HEK293 (cell line): ENCODE measurements at regions of chr2 and their contacts with region 1.

Region 1: DNA sequence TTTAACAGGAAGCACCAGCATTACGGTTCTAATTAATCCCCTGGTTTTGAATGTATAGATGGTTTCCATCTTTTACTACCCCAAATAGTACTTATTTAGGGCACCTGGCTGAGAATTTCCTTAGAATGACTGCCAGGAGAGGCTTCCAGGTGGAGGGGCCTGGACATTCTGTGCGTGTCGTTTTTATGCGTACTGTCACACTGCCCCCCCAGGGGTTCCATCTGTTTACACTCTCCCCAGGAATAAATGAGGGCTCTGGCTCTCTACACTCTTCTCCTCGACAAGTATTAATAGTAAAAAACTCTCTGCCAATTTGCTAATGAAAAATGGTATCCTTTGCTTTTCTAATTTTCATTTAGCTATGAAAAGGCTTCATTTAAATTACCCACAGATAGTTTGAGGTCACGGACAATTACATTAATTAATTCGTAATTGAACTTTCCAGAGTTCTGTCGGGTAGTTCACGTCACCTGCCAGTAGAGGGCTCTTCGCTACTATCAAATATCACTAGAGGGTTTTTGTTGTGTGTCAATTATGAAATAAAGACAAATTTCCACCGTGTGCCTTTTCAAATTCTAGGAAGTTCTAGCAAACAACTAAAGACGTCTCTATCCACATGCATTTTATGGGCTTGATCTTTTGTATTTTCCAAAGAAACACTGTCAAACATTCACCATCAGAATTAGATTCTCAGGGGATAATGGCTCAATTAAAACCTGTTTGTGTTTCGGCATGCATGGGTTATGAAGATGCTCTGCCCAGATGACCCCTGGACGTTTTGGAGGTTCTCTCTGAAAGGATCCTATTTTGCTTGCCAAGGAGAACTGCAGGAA is 88.8 kb upstream of the ASB18 start:
- H3K4me3 ChIP-seq: no peak overlapping the region
- H3K27ac ChIP-seq: no peak overlapping the region
- H3K4me1 ChIP-seq: no peaks in the 10 kb centered on the region
- CTCF ChIP-seq: peak; percentile 37; the same call in 1 of the 2 replicates

Region 2: GRCh38 chr2:236236559-236237452 is 116.2 kb before region 1 on chr2:
- CTCF ChIA-PET with region 1: no interaction called
- POLR2A ChIA-PET with region 1: no interaction called
- H3K4me3 ChIP-seq: peak overlapping the region; percentile 17; the same call in 1 of the 2 replicates
- H3K27ac ChIP-seq: no peak overlapping the region
- H3K4me1 ChIP-seq: no peaks in the 10 kb centered on the region; the same call in 1 of the 2 replicates
- CTCF ChIP-seq: no peak

Region 3: GRCh38 chr2:236309669-236310029 is 43.3 kb before region 1 on chr2:
- CTCF ChIA-PET with region 1: interaction called, 10 read pairs
- POLR2A ChIA-PET with region 1: no interaction called
- H3K4me3 ChIP-seq: no peak overlapping the region
- H3K27ac ChIP-seq: no peak overlapping the region
- H3K4me1 ChIP-seq: no peaks in the 10 kb centered on the region
- CTCF ChIP-seq: no peak; the same call in 1 of the 2 replicates

Region 4: DNA sequence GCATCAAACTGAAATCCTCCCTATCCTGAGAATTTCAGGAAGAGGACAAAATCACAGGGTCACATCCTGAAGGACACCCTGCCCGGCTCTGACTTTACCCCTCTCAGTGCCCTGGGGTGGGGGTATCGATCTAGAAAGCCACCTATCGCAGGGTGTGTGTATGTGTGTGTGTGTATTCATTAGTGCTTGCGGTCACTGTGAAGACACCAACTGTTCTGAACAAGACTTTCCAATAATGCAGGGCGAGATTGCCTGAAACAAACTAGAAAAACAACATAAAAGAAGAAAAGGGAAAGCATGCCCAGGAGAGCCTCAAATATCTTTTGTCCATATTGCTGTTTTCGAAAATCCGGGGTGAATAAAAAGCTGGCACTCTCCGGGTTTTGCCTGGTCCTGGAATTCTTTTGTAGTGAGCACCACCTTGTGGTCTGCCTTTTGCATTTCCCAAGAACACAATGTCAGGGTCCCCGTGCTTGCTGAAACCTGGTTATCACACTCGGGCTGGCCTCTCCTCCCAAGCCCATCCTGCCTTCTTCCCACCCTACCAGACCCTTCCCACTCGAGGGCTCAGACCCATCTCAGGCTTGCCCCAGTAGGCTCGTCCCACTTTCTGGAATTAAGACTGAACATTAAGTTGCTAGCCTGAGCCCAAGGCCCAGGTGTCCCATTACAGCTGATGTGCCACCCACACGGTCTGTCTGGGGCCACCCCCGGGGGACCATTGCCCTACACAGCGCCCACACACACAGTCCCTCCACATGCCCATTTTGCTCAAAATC is 707.7 kb after region 1 on chr2:
- CTCF ChIA-PET with region 1: interaction called, 37 read pairs
- POLR2A ChIA-PET with region 1: no interaction called
- H3K4me3 ChIP-seq: no peak overlapping the region
- H3K27ac ChIP-seq: no peak overlapping the region
- H3K4me1 ChIP-seq: no peaks in the 10 kb centered on the region
- CTCF ChIP-seq: peak; percentile 45; the same call in 1 of the 2 replicates

Region 5: DNA sequence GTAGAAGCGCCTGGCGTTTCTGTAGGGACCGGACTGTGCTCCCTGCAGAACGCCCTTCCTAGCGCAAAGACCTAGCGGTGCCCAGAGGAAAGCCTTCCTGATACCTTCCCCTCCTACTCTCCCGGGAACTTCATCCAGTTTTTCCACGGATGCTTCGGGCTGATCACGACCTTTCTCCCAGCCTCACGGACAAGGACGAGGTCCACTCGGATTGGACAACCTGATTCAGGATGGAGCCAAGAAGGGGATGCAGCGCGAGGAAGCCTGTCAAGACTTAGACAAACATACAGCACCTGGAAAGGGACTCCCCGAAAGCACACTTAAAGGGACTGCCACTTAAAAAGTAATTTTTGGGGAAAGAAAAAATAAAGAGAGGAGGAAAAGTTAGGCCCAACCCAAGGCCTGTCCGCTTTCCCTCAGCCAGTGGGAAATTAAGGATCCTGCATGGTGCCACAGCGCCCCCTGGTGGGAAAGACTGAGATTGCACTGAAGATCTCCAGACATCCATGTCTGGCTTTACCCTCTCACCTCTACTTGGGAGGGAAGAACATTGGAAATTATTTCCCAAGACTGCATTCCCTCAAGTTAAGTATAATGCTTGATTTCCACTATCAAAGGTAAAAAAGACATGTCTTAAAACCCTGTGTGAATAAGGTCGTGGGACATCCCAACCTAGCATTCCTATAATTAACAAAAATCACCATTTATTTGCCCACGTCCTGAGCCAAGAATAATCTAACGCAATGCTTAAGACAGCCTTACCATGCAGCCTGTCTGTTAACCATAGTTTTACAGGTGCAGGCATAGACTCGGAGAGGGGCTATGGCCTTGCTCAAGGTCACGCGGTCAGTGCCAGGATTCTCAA is 719.3 kb after region 1 on chr2:
- CTCF ChIA-PET with region 1: interaction called, 16 read pairs
- POLR2A ChIA-PET with region 1: no interaction called
- H3K4me3 ChIP-seq: no peak overlapping the region
- H3K27ac ChIP-seq: no peak overlapping the region
- H3K4me1 ChIP-seq: no peaks in the 10 kb centered on the region
- CTCF ChIP-seq: peak; percentile 57